Heart right ventricle (tissue), 16 donors: ENCODE measurements at regions of chr5 and their contacts with region 1.

Region 1: DNA sequence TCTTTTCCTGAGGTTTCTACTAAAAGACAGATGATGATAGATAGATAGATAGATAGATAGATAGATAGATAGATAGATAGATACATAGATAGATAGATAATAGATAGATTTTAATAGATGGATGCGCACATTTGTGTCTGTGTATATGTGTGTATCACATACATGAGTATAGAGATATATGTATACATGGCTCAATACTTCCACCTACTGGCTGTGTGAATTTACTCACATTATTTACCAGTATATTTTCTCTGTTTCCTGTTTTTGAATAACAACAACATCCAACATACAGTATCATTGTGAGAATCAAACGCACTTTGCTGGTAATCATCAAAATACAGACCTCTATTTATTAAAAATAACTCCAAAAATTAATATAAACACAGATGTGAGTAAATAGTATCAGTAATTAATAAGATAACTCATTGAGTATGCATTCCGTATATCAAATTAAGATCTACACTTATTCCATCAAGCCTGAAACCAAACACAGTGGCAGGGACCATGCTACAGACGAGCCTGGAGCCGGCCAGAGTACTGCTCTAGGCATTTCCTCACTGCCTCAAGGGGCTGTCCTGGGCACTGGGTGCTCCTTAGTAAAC is 338.0 kb downstream of the SEMA5A start:
- DNase-seq: no peak
- ATAC-seq: no peak
- H3K4me3 ChIP-seq: no peak overlapping the region
- H3K27ac ChIP-seq: no peak overlapping the region
- H3K4me1 ChIP-seq: peaks cover 0 to 4% (median 0%) of the 10 kb centered on the region in 9 donors
- H3K27me3 ChIP-seq: no peaks in the 10 kb centered on the region
- CTCF ChIP-seq: peak in 8 of 9 donors; percentile 22 to 60 (median 44)

Region 2: GRCh38 chr5:7927466-7928375 is 1280.2 kb before region 1 on chr5:
- intact Hi-C with region 1: loop called in 3 of 10 experiments (anchors 5 to 10 kb)
- DNase-seq: peak; percentile 17 to 21
- ATAC-seq: peak in 7 of 8 donors; percentile 52 to 84 (median 68)
- H3K4me3 ChIP-seq: no peak overlapping the region
- H3K27ac ChIP-seq: no peak overlapping the region
- H3K4me1 ChIP-seq: no peaks in the 10 kb centered on the region
- H3K27me3 ChIP-seq: peaks cover 0 to 20% (median 6%) of the 10 kb centered on the region in 7 donors
- CTCF ChIP-seq: peak; percentile 27 to 77 (median 73)

Region 3: DNA sequence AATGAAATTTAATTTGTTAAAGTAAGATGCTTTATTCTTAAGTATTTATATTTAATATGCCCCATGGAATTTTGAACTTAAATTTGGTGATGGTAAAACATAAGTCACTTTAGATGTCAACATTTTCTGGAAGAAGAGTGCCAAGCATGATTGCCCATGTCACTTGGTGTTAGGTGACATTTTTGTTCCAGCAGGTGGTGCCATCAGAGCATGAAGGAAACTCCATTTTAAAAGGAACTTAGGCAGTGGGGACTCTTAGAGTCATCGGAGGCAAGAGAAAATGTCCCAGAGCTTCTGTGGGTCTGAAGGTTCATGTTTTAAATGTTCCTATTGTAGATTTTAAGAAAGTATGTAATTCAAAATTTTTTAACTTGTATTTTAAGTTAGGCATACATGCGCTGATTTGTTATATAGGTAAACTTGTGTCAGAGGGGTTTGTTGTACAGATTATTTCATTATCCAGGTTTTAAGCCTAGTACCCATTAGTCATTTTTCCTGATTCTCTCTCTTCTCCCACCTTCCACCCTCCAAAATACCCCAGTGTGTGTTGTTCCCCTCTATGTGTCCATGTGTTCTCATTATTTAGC is 451.3 kb before region 1 on chr5:
- intact Hi-C with region 1: loop called in 2 of 10 experiments (anchors 5 to 10 kb)
- DNase-seq: no peak
- ATAC-seq: peak in 1 of 8 donors; percentile 47
- H3K4me3 ChIP-seq: no peak overlapping the region
- H3K27ac ChIP-seq: no peak overlapping the region
- H3K4me1 ChIP-seq: no peaks in the 10 kb centered on the region
- H3K27me3 ChIP-seq: peaks cover 0 to 5% (median 0%) of the 10 kb centered on the region in 7 donors
- CTCF ChIP-seq: peak in 8 of 9 donors; percentile 10 to 55 (median 41)

Region 4: DNA sequence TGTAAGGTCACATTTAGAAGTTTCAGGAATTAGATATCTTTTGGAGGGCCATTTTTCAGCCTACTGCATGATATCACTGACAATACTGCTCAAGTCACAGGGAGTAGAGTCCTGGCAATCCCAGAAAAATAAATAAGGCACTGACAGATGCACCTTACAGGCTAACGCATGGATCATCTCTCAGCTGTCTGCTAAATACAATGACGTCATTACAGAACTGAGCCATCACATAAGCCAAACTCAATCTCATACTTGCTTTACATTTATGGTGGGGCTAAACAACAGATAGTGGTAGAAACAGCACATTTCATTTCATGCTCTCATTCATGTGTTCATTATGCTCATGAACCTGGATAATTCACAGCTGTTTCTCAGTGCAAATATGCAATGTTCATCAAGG is 94.3 kb after region 1 on chr5:
- intact Hi-C with region 1: no loop called
- DNase-seq: no peak
- ATAC-seq: no peak
- H3K4me3 ChIP-seq: no peak overlapping the region
- H3K27ac ChIP-seq: no peak overlapping the region
- H3K4me1 ChIP-seq: no peaks in the 10 kb centered on the region
- H3K27me3 ChIP-seq: no peaks in the 10 kb centered on the region
- CTCF ChIP-seq: no peak